Dorsolateral prefrontal cortex (tissue), 120 donors: ENCODE measurements at regions of chr1 and their contacts with region 1.

Region 1: DNA sequence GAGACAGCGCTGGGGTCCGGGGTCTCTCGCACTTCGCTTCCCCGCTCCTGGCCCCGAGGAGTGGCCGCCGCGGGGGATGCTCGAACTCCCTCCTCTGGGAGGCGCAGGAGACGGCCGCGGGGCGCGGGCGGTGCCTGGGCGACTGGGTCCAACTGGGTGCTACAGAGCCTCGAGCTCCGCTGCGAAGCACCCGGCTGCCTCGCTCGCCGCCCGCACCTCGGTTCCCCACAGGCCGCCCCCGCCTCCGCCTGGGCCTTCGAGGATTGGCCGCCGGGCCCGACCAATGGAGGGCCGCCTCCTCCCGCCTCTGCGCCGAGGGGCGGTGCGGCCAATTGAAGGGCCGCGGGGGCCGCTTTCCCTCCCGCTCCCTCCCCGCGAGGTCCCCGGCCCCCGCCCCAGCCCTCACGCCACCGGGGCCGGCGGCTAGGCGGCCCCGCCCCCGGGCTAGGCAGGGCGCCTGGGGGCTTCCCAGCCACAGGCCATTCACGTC is at the start of gene CNN3:
- DNase-seq: peak; percentile 87 to 96 (median 92)
- H3K4me3 ChIP-seq: peak within 1 kb of the TSS; percentile 67 to 96 (median 88)
- H3K27ac ChIP-seq: peak within 1 kb of the TSS; percentile 75 to 100 (median 98)
- H3K27me3 ChIP-seq: no peaks in the 10 kb centered on the region
- CTCF ChIP-seq: peak in 15 of 56 donors; percentile 1 to 30 (median 15)
- total RNA-seq, gene CNN3: 91.8 to 419 (median 154) TPM

Region 2: GRCh38 chr1:94854458-94855306 is 72.3 kb before region 1 on chr1:
- intact Hi-C with region 1: loop called (anchors 1 to 5 kb)
- DNase-seq: peak; percentile 73 to 92 (median 86)
- H3K4me3 ChIP-seq: peak overlapping the region; percentile 9 to 74 (median 51)
- H3K27ac ChIP-seq: peak overlapping the region in 39 of 59 donors; percentile 6 to 81 (median 51)
- H3K27me3 ChIP-seq: no peaks in the 10 kb centered on the region
- CTCF ChIP-seq: peak; percentile 76 to 98 (median 94)

Region 3: DNA sequence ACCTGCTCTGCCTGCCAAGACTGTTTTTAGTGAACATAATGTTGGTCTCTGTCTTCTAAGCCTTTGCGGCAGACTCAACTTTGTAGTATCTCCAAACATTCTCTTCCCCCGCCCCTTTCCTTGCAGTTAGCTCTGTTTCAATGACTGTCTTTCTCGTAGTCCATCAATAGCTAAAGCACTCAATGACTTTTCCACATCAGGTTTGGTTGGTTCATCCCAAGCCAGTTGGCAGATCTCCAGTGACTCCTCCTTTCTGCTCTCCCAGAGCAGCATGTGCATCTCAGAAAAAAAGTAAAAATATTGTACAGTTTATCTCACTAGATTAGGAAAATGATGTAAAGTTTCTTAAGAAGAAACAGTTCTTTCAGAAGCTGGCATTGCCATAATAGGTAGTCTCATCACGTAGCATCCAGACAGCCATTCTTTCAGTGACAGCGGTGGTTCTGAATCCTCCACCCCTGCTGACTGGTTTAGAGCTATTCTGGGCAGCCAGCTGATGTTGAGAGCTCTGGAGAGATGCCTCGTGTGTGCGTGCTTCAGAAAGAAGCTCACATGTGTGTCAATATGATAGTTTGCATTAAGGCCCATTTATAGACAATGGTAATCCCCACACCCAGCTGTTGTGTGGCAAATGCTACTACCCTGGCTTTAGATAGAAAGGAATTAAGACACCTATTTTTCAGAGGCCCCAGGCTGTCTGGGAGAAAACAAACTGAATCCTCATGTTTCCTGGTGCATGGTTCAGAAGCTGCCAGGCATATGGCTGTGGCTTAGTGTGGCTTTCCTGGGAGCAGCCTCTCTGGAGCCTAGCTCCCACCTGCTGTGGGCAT is 53.2 kb before region 1 on chr1:
- intact Hi-C with region 1: loop called in 1 of 2 experiments (anchors 5 kb)
- DNase-seq: peak in 9 of 10 donors; percentile 27 to 89 (median 82)
- H3K4me3 ChIP-seq: peak overlapping the region in 31 of 59 donors; percentile 1 to 40 (median 20)
- H3K27ac ChIP-seq: peak overlapping the region in 56 of 59 donors; percentile 19 to 87 (median 69)
- H3K27me3 ChIP-seq: no peaks in the 10 kb centered on the region
- CTCF ChIP-seq: peak in 5 of 56 donors; percentile 12 to 29 (median 20)

Region 4: GRCh38 chr1:95043141-95043980 is 116.4 kb after region 1 on chr1:
- intact Hi-C with region 1: loop called (anchors 2 kb)
- DNase-seq: peak; percentile 75 to 93 (median 84)
- H3K4me3 ChIP-seq: peak overlapping the region in 15 of 59 donors; percentile 0 to 36 (median 18)
- H3K27ac ChIP-seq: peak overlapping the region in 47 of 59 donors; percentile 0 to 84 (median 53)
- H3K27me3 ChIP-seq: no peaks in the 10 kb centered on the region
- CTCF ChIP-seq: peak in 55 of 56 donors; percentile 97 to 100 (median 99)